PC-9 (cell line): ENCODE measurements at regions of chr9 and their contacts with region 1.

Region 1: DNA sequence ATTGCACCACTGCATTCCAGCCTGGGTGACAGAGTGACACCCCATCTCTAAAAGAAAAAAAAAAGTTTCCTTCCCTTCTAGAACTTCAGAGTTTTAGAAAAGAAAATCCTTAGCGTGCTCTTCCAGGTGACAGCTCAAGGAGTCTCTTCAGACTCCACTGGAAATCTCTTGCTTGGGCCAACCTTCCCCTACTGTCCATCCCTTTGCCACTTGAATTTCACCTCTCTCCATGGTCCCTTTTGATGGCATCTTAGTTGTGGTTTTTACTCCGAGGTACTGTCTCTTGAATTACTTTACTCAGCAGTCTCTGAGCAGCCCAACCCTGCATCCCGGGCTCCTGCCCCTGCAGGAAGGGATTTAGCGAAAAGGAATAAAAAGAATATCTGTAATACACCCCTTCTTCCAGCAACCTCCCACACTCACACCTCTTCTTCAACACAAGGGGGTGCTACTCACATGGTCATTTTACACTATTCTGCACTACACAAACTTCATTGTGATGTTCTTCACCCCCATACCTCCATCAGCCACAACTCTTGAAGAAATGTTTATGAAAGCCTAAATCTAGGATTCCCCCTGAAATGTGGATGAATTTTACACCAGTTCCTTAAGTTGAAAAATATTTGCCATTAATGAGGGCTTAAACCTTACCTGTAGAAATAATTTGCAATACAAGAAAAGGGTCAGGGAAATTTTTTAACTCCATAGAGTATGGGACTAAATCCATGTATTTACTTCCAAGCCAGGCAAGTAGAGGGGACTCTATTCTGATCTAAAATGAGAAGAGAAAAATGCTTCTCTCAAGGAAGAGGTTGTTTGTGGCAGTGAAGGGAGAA is 25.9 kb downstream of the TPD52L3 start:
- DNase-seq: no peak
- H3K4me3 ChIP-seq: no peak overlapping the region
- H3K27ac ChIP-seq: no peak overlapping the region
- H3K4me1 ChIP-seq: peaks cover 34% of the 10 kb centered on the region
- H3K27me3 ChIP-seq: no peaks in the 10 kb centered on the region
- CTCF ChIP-seq: peak; percentile 73

Region 2: DNA sequence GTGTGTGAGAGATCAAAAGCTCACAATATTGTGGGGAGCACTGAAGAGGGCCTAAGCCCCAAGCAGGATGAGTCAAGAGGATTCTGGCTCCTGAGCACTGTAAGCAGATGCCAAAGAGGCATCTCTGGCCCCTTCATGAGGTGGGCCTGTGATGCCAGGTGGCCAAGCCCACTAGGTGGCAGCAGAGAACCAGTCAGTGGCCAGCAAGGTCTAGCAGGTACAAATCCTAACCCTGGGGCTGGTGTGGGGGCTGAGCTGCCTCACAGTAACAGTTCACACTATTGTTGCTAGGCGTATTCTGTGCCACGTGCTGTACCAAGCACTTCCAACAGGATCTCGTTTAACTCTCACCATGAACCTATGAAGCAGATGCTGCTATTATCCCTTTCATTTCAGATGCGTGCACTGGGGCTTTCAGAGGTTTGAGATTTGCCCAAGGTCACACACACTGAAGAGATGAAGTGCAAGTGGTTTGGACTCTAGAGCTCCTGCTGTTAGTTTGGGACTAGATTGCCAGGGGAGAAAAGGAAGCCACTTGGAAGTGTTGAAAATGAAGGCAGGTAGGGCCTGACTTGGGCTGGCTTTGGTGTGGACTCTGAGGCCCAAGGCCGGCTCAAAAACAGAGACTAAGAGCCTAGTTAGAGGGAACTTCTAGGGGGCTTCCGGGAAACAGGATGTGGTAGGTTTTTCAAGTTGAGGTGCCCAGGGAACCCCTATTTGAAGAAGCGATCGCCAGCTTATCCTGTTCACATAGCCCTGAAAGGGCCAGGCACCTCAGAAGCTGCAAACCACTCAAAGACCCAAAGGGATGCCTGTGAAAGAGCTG is 467.7 kb before region 1 on chr9:
- CTCF ChIA-PET with region 1: no interaction called
- POLR2A ChIA-PET with region 1: no interaction called
- intact Hi-C with region 1: no loop called
- DNase-seq: peak; percentile 41 to 65
- H3K4me3 ChIP-seq: no peak overlapping the region
- H3K27ac ChIP-seq: no peak overlapping the region
- H3K4me1 ChIP-seq: peaks cover 11% of the 10 kb centered on the region
- H3K27me3 ChIP-seq: no peaks in the 10 kb centered on the region
- CTCF ChIP-seq: peak; percentile 81

Region 3: DNA sequence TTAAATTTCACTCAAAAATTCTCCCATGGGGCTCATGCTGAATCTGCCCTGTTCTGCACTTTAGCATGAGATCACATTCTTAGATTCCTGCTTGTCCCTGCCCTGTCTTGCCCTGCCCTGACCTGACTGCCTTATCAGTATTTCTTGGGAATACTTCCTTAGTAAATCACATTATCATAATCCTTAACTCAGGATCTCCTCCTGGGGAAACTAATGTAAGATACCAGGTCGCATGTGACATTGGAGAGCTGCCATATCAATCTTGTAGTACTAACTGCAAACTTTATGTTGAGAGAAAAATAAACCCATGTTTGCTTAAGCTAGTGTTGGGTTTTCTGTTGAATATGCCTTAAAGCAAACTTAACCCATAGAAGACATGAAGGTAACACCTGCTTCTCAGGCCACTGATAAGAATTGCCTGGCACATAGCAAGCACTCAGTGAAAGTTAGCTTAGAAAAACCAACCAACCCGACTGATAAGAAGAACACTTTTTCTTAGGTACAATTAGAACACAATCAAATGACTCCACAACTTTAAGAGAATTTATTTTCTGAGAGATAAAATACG is 85.2 kb before region 1 on chr9:
- CTCF ChIA-PET with region 1: no interaction called
- POLR2A ChIA-PET with region 1: no interaction called
- intact Hi-C with region 1: no loop called
- DNase-seq: no peak
- H3K4me3 ChIP-seq: no peak overlapping the region
- H3K27ac ChIP-seq: no peak overlapping the region
- H3K4me1 ChIP-seq: no peaks in the 10 kb centered on the region
- H3K27me3 ChIP-seq: no peaks in the 10 kb centered on the region
- CTCF ChIP-seq: no peak

Region 4: GRCh38 chr9:6566409-6567139 is 212.5 kb after region 1 on chr9:
- CTCF ChIA-PET with region 1: no interaction called
- POLR2A ChIA-PET with region 1: interaction called, 8 read pairs
- intact Hi-C with region 1: loop called (anchors 2 kb)
- DNase-seq: peak; percentile 43 to 88
- H3K4me3 ChIP-seq: peak overlapping the region; percentile 33; the same call in 1 of the 2 replicates
- H3K27ac ChIP-seq: peak overlapping the region; percentile 100
- H3K4me1 ChIP-seq: peaks cover 34% of the 10 kb centered on the region
- H3K27me3 ChIP-seq: no peaks in the 10 kb centered on the region
- CTCF ChIP-seq: no peak

Region 5: GRCh38 chr9:6600006-6600405 is 245.9 kb after region 1 on chr9:
- CTCF ChIA-PET with region 1: no interaction called
- POLR2A ChIA-PET with region 1: interaction called, 11 read pairs
- intact Hi-C with region 1: no loop called
- DNase-seq: no peak
- H3K4me3 ChIP-seq: no peak overlapping the region
- H3K27ac ChIP-seq: no peak overlapping the region
- H3K4me1 ChIP-seq: no peaks in the 10 kb centered on the region
- H3K27me3 ChIP-seq: no peaks in the 10 kb centered on the region
- CTCF ChIP-seq: no peak

Region 6: GRCh38 chr9:6667633-6668280 is 313.7 kb after region 1 on chr9:
- CTCF ChIA-PET with region 1: no interaction called
- POLR2A ChIA-PET with region 1: no interaction called
- intact Hi-C with region 1: loop called (anchors 1 kb)
- DNase-seq: no peak
- H3K4me3 ChIP-seq: no peak overlapping the region
- H3K27ac ChIP-seq: no peak overlapping the region
- H3K4me1 ChIP-seq: peaks cover 15% of the 10 kb centered on the region
- H3K27me3 ChIP-seq: no peaks in the 10 kb centered on the region
- CTCF ChIP-seq: peak; percentile 69